ENCODE measurements at regions of chr4 and their contacts with region 1.

Region 1: GRCh38 chr4:22410645-22411247 is 105.1 kb downstream of the ADGRA3 start:
- DNase-seq: no peak
- H3K4me3 ChIP-seq: no peak overlapping the region
- H3K27ac ChIP-seq: no peak overlapping the region
- H3K4me1 ChIP-seq: no peaks in the 10 kb centered on the region
- H3K27me3 ChIP-seq: no peaks in the 10 kb centered on the region
- CTCF ChIP-seq: peak; percentile 28 to 50 (median 34)
- POLR2A ChIP-seq: no peak

Region 2: GRCh38 chr4:20904966-20905365 is 1505.8 kb before region 1 on chr4:
- intact Hi-C with region 1: no loop called
- DNase-seq: no peak
- H3K4me3 ChIP-seq: no peak overlapping the region
- H3K27ac ChIP-seq: no peak overlapping the region
- H3K4me1 ChIP-seq: no peaks in the 10 kb centered on the region
- H3K27me3 ChIP-seq: no peaks in the 10 kb centered on the region
- CTCF ChIP-seq: no peak
- POLR2A ChIP-seq: no peak

Region 3: DNA sequence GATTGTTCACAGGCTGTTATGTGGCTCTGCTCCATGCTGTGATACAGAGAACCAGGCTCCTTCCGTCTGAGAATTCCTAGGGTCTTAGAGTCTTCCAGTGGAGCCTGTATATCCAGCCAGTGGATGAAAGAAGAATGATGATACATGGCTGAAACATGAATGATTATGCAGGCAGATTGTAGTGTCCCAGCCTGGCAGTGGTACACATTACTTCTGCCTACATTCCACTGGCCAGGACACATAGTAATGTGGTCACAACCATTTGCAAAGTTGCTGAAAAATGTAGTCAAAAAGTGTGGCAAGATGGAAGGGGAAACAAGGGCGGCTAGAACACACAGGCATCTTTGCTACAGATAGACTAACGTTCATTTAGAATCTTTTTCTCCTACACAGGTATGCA is 277.5 kb after region 1 on chr4:
- intact Hi-C with region 1: loop called (anchors 10 kb)
- DNase-seq: no peak
- H3K4me3 ChIP-seq: no peak overlapping the region
- H3K27ac ChIP-seq: no peak overlapping the region
- H3K4me1 ChIP-seq: no peaks in the 10 kb centered on the region
- H3K27me3 ChIP-seq: no peaks in the 10 kb centered on the region
- CTCF ChIP-seq: no peak
- POLR2A ChIP-seq: no peak

Measured in breast epithelium (tissue), 4 donors.